CD4-positive, alpha-beta T cell (primary cell): ENCODE measurements at regions of chr7 and their contacts with region 1.

Region 1: DNA sequence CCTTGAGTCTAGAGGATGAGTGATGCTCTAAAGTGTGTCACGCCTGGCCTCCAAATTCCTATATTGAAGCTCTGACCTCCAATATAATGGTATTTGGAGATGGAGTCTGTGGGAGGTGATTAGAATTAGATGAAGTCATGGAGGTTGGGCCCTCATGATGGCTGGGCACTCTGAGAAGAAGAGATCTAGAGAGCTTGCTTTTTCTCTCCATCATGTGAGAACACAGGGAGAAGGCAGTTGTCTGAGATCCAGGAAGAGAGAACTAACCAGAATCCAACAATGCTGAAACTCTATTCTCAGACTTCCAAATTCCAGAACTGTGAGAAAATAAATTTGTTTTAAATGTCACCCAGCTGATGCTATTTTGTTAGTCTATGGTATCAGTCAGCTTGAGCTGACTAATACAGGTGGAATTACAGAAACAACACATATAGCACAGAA is 15.1 kb downstream of the RNF216 start:
- DNase-seq: no peak
- ATAC-seq: no peak
- H3K4me3 ChIP-seq: no peak overlapping the region
- H3K4me3 Mint-ChIP-seq: no peak overlapping the region
- H3K27ac ChIP-seq: no peak overlapping the region
- H3K27ac Mint-ChIP-seq: peak overlapping the region; percentile 41
- H3K4me1 ChIP-seq: peaks cover 9% of the 10 kb centered on the region
- H3K4me1 Mint-ChIP-seq: peaks cover 50% of the 10 kb centered on the region
- H3K27me3 ChIP-seq: no peaks in the 10 kb centered on the region
- H3K27me3 Mint-ChIP-seq: no peaks in the 10 kb centered on the region
- CTCF ChIP-seq: no peak

Region 2: DNA sequence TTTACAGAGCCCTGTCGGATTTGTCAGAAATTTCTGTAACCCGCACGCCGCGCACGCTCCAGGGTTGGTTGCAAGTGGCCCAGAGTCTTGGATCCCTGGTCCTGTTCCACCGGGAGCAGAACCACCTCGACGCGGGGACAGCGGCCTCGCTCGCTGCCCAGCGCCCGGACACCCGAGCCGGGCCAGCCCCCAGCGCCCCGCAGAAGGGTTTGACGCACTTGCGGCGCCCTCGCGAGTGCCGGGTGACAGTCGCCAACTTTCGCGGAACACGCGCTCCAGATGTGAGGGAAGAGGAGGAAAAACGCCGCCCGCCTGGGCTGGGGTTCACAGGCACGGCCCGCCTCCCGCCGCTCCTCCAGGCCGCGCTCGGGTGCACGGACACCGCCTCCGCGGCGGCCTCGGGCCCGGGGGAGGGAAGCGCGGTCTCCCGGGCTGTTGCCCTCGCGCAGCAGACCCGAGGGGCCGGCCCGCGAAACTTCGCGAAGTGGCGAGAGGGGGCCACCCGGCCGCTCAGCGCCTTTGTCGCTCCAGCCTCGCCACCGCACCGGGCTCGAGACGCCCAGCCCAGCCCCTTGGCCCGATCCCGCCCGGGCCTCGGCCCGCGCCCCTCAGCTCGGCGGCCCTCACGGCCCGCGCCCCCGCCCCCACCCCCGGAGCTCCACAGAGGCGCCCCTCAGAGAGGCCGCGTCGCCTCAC is 14.6 kb after region 1 on chr7:
- CTCF ChIA-PET with region 1: interaction called, 25 read pairs
- POLR2A ChIA-PET with region 1: interaction called, 6 read pairs
- intact Hi-C with region 1: no loop called
- DNase-seq: peak in 11 of 14 experiments; percentile 2 to 53 (median 24)
- ATAC-seq: peak; percentile 5
- H3K4me3 ChIP-seq: peak overlapping the region; percentile 52
- H3K4me3 Mint-ChIP-seq: peak overlapping the region; percentile 93
- H3K27ac ChIP-seq: peak overlapping the region in 1 of 2 donors; percentile 73
- H3K27ac Mint-ChIP-seq: peak overlapping the region; percentile 88
- H3K4me1 ChIP-seq: peaks cover 40% of the 10 kb centered on the region
- H3K4me1 Mint-ChIP-seq: peaks cover 41% of the 10 kb centered on the region
- H3K27me3 ChIP-seq: no peaks in the 10 kb centered on the region
- H3K27me3 Mint-ChIP-seq: no peaks in the 10 kb centered on the region
- CTCF ChIP-seq: no peak